ENCODE measurements at regions of chr9 and their contacts with region 1.

Region 1: GRCh38 chr9:88197781-88198340 is 59.6 kb upstream of the SPATA31C2 start:
- DNase-seq: peak; percentile 13
- H3K4me3 Mint-ChIP-seq: peak overlapping the region; percentile 9
- H3K27ac Mint-ChIP-seq: peak overlapping the region; percentile 95
- H3K4me1 Mint-ChIP-seq: peaks cover 42% of the 10 kb centered on the region
- H3K27me3 Mint-ChIP-seq: no peaks in the 10 kb centered on the region
- CTCF ChIP-seq: no peak

Region 2: GRCh38 chr9:87959916-87960581 is 237.8 kb before region 1 on chr9:
- CTCF ChIA-PET with region 1: no interaction called
- intact Hi-C with region 1: no loop called
- DNase-seq: no peak
- H3K4me3 Mint-ChIP-seq: no peak overlapping the region
- H3K27ac Mint-ChIP-seq: no peak overlapping the region
- H3K4me1 Mint-ChIP-seq: no peaks in the 10 kb centered on the region
- H3K27me3 Mint-ChIP-seq: no peaks in the 10 kb centered on the region
- CTCF ChIP-seq: no peak

Region 3: GRCh38 chr9:88011005-88011766 is 186.7 kb before region 1 on chr9:
- CTCF ChIA-PET with region 1: no interaction called
- intact Hi-C with region 1: no loop called
- DNase-seq: no peak
- H3K4me3 Mint-ChIP-seq: no peak overlapping the region
- H3K27ac Mint-ChIP-seq: no peak overlapping the region
- H3K4me1 Mint-ChIP-seq: peaks cover 14% of the 10 kb centered on the region
- H3K27me3 Mint-ChIP-seq: no peaks in the 10 kb centered on the region
- CTCF ChIP-seq: no peak

Region 4: DNA sequence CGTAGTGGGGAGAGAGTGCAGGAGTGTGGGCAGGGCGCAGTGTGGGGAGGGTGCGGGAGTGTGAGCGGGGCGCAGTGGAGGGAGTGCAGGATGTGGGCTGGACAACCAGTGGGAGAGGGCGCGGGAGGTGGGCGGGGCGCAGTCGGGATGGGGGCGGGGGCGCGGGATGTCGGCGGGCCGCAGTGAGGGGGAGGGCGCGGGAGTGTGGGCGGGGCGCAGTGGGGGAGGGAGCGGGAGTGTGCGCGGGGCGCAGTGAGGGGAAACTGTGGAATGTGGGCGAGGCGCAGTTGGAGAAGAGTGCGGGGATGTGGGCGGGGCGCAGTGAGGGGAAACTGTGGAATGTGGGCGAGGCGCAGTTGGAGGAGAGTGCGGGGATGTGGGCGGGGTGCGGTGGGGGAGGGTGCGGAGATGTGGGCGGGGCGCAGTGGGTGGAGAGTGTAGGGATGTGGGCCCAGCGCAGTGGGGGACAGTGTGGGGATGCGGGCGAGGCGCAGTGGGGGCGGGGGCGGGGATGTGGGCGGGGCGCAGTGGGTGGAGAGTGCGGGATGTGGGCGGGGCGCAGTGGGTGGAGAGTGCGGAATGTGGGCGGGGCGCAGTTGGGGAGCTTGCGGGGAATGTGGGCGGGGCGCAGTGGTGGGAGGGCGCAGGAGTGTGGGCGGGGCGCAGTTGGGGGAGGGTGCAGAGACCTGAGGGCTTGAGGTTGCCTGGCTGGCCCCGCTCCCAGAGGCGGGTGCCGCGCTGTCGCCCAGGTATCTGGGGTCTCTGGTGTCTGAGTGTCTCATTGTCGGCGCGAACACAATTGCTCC is 336.8 kb after region 1 on chr9 and contains the start of gene NXNL2:
- CTCF ChIA-PET with region 1: no interaction called
- intact Hi-C with region 1: loop called (anchors 10 kb)
- DNase-seq: peak; percentile 89
- H3K4me3 Mint-ChIP-seq: peak within 1 kb of the TSS; percentile 85
- H3K27ac Mint-ChIP-seq: peak within 1 kb of the TSS; percentile 82
- H3K4me1 Mint-ChIP-seq: peaks cover 12% of the 10 kb centered on the region
- H3K27me3 Mint-ChIP-seq: no peaks in the 10 kb centered on the region
- CTCF ChIP-seq: no peak
- total RNA-seq, gene NXNL2: 1.4 TPM in 2 replicates

Measured in Calu3 (cell line).